HepG2 (cell line): ENCODE measurements at regions of chr7 and their contacts with region 1.

Region 1: DNA sequence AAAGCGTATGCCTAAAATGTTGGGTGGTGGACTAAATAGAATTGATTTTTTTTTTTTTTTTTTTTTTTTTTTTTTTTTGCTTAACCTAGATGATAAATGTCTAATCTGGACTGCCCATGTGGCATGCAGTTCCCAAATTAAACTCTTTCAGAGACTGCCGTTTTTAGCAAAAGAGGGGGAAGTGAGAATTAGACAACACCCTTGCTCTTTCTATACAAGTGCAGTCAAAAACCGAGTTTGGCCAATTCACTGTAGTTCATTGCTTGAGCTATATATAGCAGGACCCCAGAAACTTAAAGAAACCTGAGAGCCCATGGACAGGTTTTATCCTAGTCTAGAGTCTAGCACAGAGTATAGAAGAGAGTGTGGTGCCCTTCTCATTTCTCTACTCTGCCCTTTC is 141.9 kb downstream of the GRM3 start:
- DNase-seq: no peak
- ATAC-seq: no peak
- H3K4me3 ChIP-seq: no peak overlapping the region
- H3K27ac ChIP-seq: no peak overlapping the region
- H3K4me1 ChIP-seq: no peaks in the 10 kb centered on the region
- H3K27me3 ChIP-seq: no peaks in the 10 kb centered on the region
- CTCF ChIP-seq: no peak
- EP300 ChIP-seq: no peak
- POLR2A ChIP-seq: no peak
- RAD21 ChIP-seq: no peak

Region 2: DNA sequence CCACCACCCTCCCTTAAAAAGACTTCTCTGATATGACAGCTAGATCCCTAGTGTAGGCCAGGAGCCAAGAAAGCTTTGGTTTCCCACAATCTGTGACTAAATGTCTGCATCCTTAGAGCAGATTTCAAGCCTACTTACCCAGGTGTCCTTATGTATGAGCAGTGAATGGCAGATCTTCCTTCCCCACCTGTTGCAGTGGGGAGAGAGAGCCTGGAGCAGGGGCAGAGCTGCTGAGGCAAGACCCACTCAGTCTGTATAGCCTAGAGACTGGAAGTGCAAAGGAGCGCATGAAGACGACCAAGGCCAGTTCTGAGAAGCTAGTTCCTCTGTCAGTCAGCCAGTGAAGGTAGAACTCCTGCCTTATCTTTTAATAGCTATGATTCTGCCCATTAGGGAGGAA is 38.1 kb after region 1 on chr7:
- CTCF ChIA-PET with region 1: no interaction called
- POLR2A ChIA-PET with region 1: no interaction called
- in situ Hi-C with region 1: no loop called
- intact Hi-C with region 1: no loop called
- DNase-seq: no peak
- ATAC-seq: no peak
- H3K4me3 ChIP-seq: no peak overlapping the region
- H3K27ac ChIP-seq: no peak overlapping the region
- H3K4me1 ChIP-seq: no peaks in the 10 kb centered on the region
- H3K27me3 ChIP-seq: no peaks in the 10 kb centered on the region
- CTCF ChIP-seq: no peak
- EP300 ChIP-seq: no peak
- POLR2A ChIP-seq: no peak
- RAD21 ChIP-seq: no peak

Region 3: GRCh38 chr7:87116315-87116714 is 330.7 kb after region 1 on chr7:
- CTCF ChIA-PET with region 1: no interaction called
- POLR2A ChIA-PET with region 1: no interaction called
- in situ Hi-C with region 1: no loop called
- intact Hi-C with region 1: loop called (anchors 5 kb)
- DNase-seq: no peak
- ATAC-seq: no peak
- H3K4me3 ChIP-seq: no peak overlapping the region
- H3K27ac ChIP-seq: no peak overlapping the region
- H3K4me1 ChIP-seq: no peaks in the 10 kb centered on the region
- H3K27me3 ChIP-seq: no peaks in the 10 kb centered on the region
- CTCF ChIP-seq: no peak
- EP300 ChIP-seq: no peak
- POLR2A ChIP-seq: no peak
- RAD21 ChIP-seq: no peak